Vagina (tissue), 2 donors: ENCODE measurements at regions of chr21 and their contacts with region 1.

Region 1: GRCh38 chr21:46065215-46065913 is 32.5 kb upstream of the COL6A2 start:
- DNase-seq: peak; percentile 64 to 88
- H3K4me3 ChIP-seq: no peak overlapping the region
- H3K27ac ChIP-seq: peak overlapping the region; percentile 86
- H3K4me1 ChIP-seq: peaks cover 43% of the 10 kb centered on the region
- H3K27me3 ChIP-seq: no peaks in the 10 kb centered on the region
- CTCF ChIP-seq: no peak
- POLR2A ChIP-seq: no peak

Region 2: DNA sequence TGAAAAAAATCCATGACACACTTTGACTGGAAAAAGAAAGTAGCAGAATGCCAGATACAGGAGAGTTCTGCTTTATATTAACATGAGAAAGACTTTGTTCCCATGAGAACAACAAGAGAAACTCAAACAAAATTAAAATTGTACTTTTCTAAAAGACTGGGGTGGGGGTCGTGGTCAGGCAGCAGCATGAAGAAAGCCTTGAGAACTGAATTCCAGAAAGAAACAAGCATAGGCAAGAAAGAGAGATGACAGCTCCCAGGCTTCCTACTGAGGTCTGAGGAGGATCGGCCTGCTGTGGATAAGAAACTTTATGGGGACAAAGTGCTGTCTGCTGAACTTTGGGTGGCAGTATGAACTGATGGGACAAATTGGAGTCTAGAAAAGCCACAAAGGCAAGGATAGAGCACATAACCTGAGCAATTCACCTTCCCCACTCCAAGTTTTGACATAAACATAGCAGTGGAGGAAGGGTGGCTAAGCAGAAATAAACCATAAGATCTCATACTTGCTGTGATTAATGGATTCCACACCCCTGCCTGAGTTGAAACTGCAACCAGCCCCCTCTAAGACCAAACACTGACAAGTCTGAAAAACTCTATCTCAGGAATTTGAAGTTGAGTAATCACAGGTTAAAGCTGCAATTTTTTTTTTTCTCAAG is 40.1 kb before region 1 on chr21:
- intact Hi-C with region 1: loop called (anchors 5 kb)
- DNase-seq: no peak
- H3K4me3 ChIP-seq: no peak overlapping the region
- H3K27ac ChIP-seq: peak overlapping the region; percentile 16
- H3K4me1 ChIP-seq: peaks cover 19% of the 10 kb centered on the region
- H3K27me3 ChIP-seq: no peaks in the 10 kb centered on the region
- CTCF ChIP-seq: no peak
- POLR2A ChIP-seq: no peak